ENCODE measurements at regions of chr2 and their contacts with region 1.

Region 1: DNA sequence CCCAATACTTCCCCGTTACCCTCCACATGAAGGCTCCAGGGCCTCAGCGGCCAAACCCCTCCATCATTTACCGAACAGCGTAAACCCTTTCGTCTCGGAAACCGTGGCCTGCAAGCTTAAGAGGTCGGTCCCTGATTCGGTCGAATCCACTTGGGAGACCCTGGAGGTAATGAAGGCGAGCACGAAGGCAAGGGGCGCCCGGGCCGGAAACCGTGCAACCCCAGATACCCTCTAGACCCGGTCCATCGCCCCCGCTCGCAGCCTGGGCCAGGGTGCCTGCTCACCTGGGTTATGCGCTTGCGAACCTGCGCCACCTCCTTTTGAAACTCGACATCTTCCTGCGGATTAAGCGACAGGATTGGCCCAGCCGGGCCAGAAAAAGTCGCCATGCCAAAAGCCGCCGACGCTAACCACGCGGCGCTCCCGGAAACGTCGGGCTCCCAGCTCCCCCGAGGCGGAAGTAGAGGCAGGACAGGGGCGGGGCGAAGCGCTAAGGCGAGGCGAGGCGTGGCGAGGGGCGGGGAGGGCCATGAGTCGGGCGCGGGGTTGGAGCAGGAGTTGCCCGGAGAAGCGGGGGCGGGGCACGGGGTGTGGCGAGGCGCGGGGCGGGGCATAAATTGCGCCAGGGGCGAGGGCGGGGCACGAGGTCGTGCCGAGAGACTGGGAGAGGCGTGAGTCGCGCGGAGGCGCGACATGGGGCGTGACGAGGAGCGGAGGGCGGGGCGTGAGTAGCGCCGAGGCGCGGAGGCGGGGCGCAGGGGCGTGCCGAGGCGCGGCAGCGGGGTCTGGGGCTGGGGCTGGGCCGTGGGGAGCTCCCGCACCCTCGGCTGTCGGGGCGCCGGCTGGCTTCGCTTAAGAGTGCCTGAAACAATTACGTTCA is at the start of gene NIFK:
- DNase-seq: peak; percentile 80
- ATAC-seq: peak; percentile 98
- H3K4me3 ChIP-seq: peak within 1 kb of the TSS; percentile 99 to 100
- H3K27ac ChIP-seq: peak within 1 kb of the TSS; percentile 97
- H3K4me1 ChIP-seq: peaks cover 8% of the 10 kb centered on the region; the same call in 1 of the 2 replicates
- H3K27me3 ChIP-seq: no peaks in the 10 kb centered on the region
- CTCF ChIP-seq: no peak
- total RNA-seq, gene NIFK: 84.5 TPM

Region 2: DNA sequence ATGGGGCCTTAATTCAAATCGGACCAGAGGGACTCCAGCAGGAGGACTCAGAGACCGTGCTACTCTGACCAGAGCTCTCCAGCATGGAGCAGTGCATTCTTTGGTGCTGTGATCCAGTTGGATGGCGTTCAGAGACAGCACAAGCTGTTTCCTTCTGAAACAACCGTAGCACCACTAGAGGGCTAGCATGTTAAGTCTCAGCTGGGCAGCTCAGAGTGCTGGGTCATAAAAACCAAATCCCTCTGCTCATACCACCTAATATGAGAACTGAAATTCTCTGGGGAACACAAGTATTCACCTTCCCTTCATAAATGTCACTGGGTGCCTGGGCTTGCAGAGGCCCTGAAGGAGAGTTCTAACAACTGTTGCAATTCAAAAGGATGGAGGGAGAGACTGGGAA is 354.0 kb before region 1 on chr2:
- CTCF ChIA-PET with region 1: no interaction called
- POLR2A ChIA-PET with region 1: no interaction called
- in situ Hi-C with region 1: no loop called
- intact Hi-C with region 1: no loop called
- DNase-seq: no peak
- ATAC-seq: no peak
- H3K4me3 ChIP-seq: no peak overlapping the region
- H3K27ac ChIP-seq: no peak overlapping the region
- H3K4me1 ChIP-seq: no peaks in the 10 kb centered on the region
- H3K27me3 ChIP-seq: no peaks in the 10 kb centered on the region
- CTCF ChIP-seq: 0 out of 2 replicates have a peak, but pooled peaks have one; percentile 25

Region 3: DNA sequence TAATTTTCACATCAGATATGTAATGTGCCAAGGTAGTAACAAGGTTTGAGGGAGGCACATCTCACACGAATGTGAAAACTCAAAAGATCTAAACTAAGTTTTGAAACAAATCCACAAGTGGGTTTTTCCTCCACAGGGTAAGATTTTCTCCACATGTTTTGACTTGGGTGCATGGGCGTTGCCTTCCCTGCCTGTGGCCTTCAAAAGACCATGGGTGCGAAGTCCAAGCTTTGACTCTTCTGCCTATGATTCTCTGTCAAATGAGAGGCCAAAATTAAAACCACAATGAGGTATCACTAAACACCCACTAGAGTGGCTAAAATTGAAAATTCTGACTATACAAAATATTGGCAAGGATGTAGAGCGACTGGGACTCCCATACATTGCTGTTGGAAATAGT is 30.7 kb before region 1 on chr2:
- CTCF ChIA-PET with region 1: interaction called, 10 read pairs
- POLR2A ChIA-PET with region 1: no interaction called
- in situ Hi-C with region 1: no loop called
- intact Hi-C with region 1: no loop called
- DNase-seq: no peak
- ATAC-seq: no peak
- H3K4me3 ChIP-seq: no peak overlapping the region
- H3K27ac ChIP-seq: no peak overlapping the region
- H3K4me1 ChIP-seq: no peaks in the 10 kb centered on the region; the same call in 1 of the 2 replicates
- H3K27me3 ChIP-seq: no peaks in the 10 kb centered on the region
- CTCF ChIP-seq: no peak

Region 4: DNA sequence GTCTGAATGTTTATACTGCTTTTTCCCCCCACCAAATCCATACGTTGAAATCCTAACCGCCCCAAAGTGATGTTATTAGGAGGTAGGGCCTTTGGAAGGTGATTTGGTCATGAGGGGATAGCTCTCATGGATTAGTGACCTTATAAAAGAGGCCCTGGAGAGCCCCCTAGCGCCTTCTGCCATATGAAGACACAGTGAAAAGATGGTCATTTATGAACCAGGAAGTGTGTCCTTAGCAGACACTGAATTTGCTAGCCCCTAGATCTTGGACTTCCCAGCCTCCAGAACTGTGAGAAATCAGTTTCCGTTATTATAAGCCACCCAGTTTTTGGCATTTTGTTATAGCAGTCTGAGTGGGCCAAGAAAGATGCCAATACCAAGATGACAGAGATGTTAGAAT is 11.5 kb after region 1 on chr2:
- CTCF ChIA-PET with region 1: interaction called, 10 read pairs
- POLR2A ChIA-PET with region 1: no interaction called
- in situ Hi-C with region 1: no loop called
- intact Hi-C with region 1: no loop called
- DNase-seq: no peak
- ATAC-seq: peak; percentile 90
- H3K4me3 ChIP-seq: no peak overlapping the region
- H3K27ac ChIP-seq: no peak overlapping the region
- H3K4me1 ChIP-seq: no peaks in the 10 kb centered on the region
- H3K27me3 ChIP-seq: no peaks in the 10 kb centered on the region
- CTCF ChIP-seq: no peak